GM18951 (cell line): ENCODE measurements at regions of chr6 and their contacts with region 1.

Region 1: DNA sequence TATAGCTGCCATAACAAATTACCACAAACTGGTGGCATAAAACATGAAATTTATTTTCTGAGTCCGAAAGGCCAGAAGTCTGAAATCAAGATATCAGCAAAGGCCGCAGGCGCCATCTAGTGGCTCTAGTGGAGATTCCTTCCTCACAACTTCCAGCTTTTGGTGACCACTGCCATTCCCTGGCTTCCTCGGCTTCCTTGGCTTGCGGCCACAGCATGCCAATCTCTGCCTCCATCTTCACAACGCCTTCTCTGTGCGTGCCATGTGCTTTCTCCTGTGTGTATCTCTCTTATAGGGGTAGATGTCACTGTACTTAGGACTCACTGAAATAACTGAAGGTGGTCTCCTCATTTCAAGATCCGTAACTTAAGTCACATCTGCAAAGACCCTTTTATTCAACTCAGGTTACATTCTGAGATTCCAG is 5.4 kb upstream of the PLAGL1 start:
- POLR2A ChIP-seq: no peak

Region 2: GRCh38 chr6:142474531-142475289 is 1538.8 kb before region 1 on chr6:
- in situ Hi-C with region 1: loop called (anchors 25 kb)
- POLR2A ChIP-seq: no peak

Region 3: DNA sequence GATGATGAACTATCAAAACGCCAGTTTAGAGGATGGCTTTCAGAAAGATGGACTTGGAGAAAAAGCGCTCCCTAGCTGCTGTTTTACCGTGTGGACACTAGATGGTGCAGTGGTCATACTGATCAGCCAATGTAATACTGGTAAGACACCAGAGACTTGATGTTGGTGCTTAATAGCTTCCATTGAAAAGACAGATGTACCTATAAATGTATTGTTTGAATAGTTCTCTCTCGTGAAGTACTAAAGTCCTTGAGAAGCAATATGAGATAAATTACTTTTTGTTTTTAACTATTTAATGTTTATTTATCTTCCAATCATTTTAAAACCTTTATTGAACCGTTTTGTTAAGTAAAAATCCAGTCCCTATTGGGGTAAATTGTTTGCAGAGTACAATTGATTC is 438.1 kb before region 1 on chr6:
- in situ Hi-C with region 1: loop called (anchors 10 kb)
- POLR2A ChIP-seq: no peak

Region 4: DNA sequence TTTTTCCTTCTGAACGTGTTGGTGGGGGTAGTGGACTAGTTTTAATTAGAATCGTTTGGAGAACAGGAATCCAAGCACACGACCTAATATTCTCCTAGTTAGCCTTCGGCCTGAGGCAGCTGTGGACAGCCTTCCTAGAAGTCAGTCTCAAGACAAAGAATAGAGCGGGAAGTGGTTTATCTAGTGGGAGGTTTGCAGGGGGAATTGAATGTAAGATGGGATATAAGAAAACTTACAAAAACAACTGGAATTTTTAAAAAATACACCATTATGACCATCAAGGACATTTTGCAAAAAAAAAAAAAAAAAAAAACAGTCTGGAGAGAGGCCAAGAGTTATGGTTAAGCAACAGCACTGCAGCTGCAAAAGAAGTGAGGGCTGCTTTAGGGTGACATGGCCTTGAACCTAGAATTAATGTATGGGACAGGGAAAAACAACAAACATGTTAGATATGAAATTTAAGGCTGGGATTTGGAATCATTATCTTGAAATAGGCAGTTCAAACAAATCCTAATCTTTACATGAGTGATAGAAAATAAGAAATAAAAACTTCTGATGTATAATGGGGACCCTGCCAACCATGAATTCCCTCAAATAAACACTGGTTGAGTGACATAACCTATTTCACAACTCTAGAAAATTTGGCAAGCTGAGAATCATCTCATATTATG is 45.7 kb before region 1 on chr6:
- in situ Hi-C with region 1: no loop called
- POLR2A ChIP-seq: no peak